ENCODE measurements at regions of chr5 and their contacts with region 1.

Region 1: GRCh38 chr5:102815540-102816332 is 60.6 kb downstream of the PAM start:
- DNase-seq: no peak
- ATAC-seq: no peak
- H3K4me3 ChIP-seq: no peak overlapping the region
- H3K27ac ChIP-seq: no peak overlapping the region
- H3K4me1 ChIP-seq: peaks cover 7 to 64% (median 32%) of the 10 kb centered on the region in 9 donors
- H3K27me3 ChIP-seq: no peaks in the 10 kb centered on the region
- CTCF ChIP-seq: no peak

Region 2: DNA sequence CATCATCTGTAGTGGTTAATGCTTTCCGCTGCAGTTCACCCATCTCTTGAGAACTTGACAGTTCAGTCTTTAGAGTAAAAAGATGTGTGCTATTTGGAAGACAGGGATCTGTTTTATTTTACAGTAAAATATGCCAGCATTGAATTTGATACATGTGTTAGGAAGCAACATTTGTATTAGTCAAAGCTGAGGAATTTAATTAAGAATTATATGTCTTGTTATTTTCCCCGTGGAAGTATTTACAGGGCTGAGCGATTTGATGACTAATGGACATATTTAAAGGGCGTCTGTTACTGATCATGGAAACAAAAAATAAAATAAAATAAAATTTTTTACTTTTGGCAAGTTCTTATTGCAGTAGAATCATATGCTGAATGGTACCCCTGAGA is 40.6 kb after region 1 on chr5:
- intact Hi-C with region 1: loop called in 1 of 10 experiments (anchors 5 kb)
- DNase-seq: no peak
- ATAC-seq: no peak
- H3K4me3 ChIP-seq: no peak overlapping the region
- H3K27ac ChIP-seq: no peak overlapping the region
- H3K4me1 ChIP-seq: peaks cover 0 to 18% (median 0%) of the 10 kb centered on the region in 9 donors
- H3K27me3 ChIP-seq: no peaks in the 10 kb centered on the region
- CTCF ChIP-seq: no peak

Measured in heart right ventricle (tissue), 16 donors.